Natural killer cell (primary cell): ENCODE measurements at regions of chr6 and their contacts with region 1.

Region 1: GRCh38 chr6:18155150-18155863 is at the start of gene KDM1B:
- DNase-seq: peak; percentile 98 to 99
- ATAC-seq: peak; percentile 89 to 98 (median 91)
- H3K4me3 ChIP-seq: peak within 1 kb of the TSS; percentile 99
- H3K4me3 Mint-ChIP-seq: peak within 1 kb of the TSS; percentile 97
- H3K27ac ChIP-seq: peak within 1 kb of the TSS; percentile 95
- H3K27ac Mint-ChIP-seq: peak within 1 kb of the TSS; percentile 93 to 99
- H3K4me1 ChIP-seq: peaks cover 28% of the 10 kb centered on the region
- H3K4me1 Mint-ChIP-seq: peaks cover 26 to 34% of the 10 kb centered on the region in 2 donors
- H3K27me3 ChIP-seq: no peaks in the 10 kb centered on the region
- H3K27me3 Mint-ChIP-seq: no peaks in the 10 kb centered on the region
- CTCF ChIP-seq: no peak
- total RNA-seq, gene KDM1B: 12.7 to 13.3 (median 13.0) TPM

Region 2: DNA sequence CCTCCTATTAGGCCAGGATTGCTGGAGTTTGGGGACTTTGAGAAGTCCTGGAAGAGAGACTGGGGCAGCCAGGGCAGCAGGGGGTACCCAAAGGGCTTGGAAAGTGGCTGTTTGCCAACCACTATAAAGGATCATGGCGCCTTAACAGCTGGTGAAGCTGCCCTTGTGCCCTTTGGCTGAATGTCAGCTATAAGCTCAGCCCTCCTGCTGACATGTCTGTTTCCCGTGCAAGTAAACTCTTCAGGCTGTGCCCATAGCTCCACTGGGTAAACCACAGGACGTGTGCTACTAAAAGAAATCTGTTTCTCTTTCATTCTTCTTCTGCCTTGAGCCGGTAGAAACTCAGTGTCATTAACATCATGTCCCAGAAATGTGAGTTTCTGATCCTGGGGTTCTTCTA is 664.6 kb before region 1 on chr6:
- intact Hi-C with region 1: no loop called
- DNase-seq: no peak
- ATAC-seq: peak in 1 of 3 donors; percentile 34
- H3K4me3 ChIP-seq: no peak overlapping the region
- H3K4me3 Mint-ChIP-seq: no peak overlapping the region
- H3K27ac ChIP-seq: no peak overlapping the region
- H3K27ac Mint-ChIP-seq: no peak overlapping the region
- H3K4me1 ChIP-seq: no peaks in the 10 kb centered on the region
- H3K4me1 Mint-ChIP-seq: peaks cover 8 to 10% of the 10 kb centered on the region in 2 donors
- H3K27me3 ChIP-seq: no peaks in the 10 kb centered on the region
- H3K27me3 Mint-ChIP-seq: peaks cover 21 to 29% of the 10 kb centered on the region in 2 donors
- CTCF ChIP-seq: no peak

Region 3: DNA sequence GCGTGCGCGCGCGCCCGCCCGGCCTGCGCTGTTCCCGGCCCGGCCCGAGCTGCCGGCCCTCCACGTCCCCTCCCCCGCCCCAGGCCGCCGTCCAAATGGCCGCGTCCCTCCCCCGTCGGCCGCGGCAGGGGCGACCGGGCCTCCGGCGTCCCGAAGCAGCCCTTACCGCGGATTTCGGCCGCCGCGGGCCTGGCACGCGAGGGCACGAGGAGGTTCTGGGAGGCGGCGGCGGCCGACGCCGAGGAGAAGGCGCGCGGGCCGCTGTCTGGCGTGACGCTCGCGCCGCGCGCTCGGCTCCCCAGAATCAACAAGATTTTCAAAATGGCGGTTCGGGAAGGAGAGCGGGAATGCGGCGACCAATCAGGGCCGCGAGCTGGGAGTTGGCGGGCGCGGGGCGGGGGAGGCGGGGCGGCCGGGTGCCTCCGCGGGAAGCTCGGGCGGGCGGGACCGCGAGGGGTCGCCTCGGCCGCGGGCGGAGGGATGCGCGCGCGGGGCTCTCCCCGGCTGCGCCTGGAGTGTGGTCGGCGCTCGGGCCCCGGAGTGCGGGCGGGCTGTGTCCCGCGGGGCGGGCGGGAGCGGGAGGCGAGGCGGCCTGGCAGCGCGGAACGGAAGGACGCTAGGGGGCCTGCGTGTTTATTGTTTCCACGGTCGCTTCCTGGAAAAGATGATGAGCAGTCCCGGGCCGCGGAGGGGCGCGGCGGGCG is 109.1 kb after region 1 on chr6 and contains the start of gene DEK:
- intact Hi-C with region 1: loop called (anchors 1 kb)
- DNase-seq: peak; percentile 73 to 88
- ATAC-seq: peak; percentile 66 to 83 (median 73)
- H3K4me3 ChIP-seq: peak within 1 kb of the TSS; percentile 84
- H3K4me3 Mint-ChIP-seq: peak within 1 kb of the TSS; percentile 97
- H3K27ac ChIP-seq: peak within 1 kb of the TSS; percentile 81
- H3K27ac Mint-ChIP-seq: peak within 1 kb of the TSS; percentile 91 to 94
- H3K4me1 ChIP-seq: peaks cover 31% of the 10 kb centered on the region
- H3K4me1 Mint-ChIP-seq: peaks cover 54 to 56% of the 10 kb centered on the region in 2 donors
- H3K27me3 ChIP-seq: no peaks in the 10 kb centered on the region
- H3K27me3 Mint-ChIP-seq: no peaks in the 10 kb centered on the region
- CTCF ChIP-seq: peak; percentile 41
- total RNA-seq, gene DEK: 79.5 to 89.7 (median 80.9) TPM